ENCODE measurements at regions of chr3 and their contacts with region 1.

Region 1: DNA sequence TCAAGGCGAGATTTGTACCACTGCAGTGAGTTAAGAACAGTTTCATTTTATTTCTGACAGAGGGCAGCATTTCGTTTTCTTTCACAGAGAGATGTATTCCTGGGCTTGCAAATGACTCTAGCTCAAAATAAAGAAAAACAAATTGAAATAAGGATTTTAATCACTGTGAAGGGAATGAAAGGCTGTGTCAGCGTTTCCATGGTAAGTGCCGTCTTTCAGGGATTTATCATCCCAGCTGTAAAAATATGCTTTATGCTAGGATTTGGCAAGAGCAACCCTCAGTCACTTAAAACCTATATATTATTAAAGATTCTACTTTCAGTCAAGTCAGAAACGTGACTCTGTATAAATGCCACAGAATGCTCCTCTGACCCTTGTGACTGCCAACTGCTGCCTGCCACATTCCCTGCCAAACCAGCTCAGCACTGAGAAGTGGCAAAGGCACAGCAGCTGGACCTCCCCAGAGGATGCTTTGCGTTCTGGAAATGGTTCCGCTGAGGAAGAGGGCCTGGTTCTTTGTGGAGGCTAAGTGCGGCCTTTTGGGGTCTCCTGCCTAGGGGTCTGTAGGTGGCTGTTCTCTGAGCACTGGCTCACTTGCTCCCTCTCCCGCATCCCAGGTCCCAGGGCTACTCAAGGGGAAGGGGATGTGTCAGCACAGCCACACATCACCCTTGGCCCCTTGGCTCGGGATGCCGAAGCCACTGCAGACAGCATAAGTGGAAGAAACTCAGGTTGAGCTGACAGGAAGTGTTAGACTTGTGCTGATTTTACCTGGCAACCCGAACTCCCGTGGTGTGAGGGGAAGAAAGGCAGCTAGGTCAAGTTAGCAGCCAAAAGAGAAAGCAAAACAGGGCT is 56.6 kb upstream of the POMGNT2 start:
- DNase-seq: no peak
- ATAC-seq: peak; percentile 76 to 79

Region 2: GRCh38 chr3:43378066-43378935 is 215.8 kb after region 1 on chr3:
- intact Hi-C with region 1: loop called (anchors 10 kb)
- DNase-seq: no peak
- ATAC-seq: peak in 1 of 2 donors; percentile 76

Region 3: DNA sequence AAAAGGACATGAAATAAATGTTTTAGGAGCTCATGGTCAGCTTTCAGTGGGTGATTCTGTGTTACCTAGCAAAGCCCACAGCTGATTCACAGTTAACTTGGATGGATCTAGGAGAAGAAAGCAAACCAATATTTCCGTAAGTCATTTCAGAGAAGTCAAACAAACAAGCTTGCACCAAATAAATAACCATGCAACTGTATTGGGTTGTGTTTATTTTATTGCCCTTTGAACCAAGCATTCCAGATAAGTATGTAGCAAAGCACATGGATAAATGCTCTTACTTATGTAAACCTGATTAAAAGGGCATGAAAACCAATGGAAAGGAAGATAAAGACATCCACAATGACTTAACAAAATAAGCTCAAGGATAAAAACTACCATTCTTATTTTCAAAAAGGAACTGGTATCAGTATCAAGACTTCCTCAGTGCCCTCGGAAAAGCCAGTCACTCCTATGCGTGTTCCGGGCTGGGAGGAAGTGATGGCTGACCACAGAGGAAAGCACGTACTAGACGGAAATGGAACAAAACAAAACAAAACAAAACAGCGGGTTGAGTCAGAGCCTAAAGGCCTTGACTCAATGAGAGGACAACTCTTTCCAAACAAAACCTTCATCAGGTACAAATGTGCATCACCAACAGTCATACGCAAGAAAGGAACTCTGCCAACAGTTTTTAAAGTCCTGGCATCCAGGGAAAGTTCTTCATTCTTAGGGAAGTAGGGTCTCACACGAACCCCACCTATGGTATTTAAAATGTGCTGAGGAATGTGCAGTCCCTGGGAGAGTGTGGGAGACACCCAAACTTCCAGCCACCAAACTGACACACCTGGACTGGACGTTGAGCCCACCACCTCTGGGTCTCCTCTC is 227.2 kb after region 1 on chr3:
- intact Hi-C with region 1: loop called in 1 of 2 experiments (anchors 10 kb)
- DNase-seq: peak; percentile 75
- ATAC-seq: peak; percentile 73 to 75

Region 4: DNA sequence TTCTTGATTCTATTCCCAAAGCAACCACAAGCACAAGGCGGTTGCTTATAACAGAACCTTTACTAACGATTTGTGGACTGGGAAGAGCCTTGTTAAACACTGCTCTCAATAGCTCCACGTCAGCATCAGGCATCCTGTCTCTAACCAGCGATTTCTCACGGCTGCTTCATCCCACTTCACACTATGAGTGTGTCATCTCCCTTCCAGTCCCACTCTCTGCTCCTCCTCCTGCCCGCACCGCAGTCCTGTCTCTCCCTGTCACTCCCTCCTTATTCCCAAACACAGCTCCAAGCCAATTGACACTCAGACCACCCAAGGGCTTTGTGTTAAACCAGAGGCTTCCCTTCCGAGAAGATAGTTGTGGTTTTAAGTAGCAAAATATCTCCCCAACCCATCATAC is 623.1 kb after region 1 on chr3:
- intact Hi-C with region 1: no loop called
- DNase-seq: no peak
- ATAC-seq: no peak

Measured in left cardiac atrium (tissue), 4 donors.